ENCODE measurements at regions of chr2 and their contacts with region 1.

Region 1: DNA sequence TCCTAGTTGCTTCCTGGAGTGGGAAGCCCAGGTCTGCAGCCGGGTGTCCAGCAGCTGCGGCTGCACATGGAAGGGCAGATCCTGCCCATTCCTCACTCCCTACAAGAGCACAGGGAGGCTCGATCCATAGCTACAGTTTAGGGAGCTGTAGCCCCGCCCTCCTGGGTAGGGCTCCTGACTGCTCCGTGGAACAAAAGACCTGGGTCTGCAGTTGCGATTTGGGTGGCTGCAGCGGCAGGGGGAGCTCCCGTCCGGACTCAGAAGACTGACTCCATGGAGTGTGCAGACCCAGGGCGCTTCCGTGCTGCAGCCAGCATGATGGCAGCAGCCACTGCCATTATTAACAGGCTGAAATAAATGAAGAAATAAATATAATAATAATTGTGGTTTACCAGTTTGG is 157.3 kb downstream of the CTNNA2 start:
- DNase-seq: no peak
- ATAC-seq: no peak
- H3K4me3 ChIP-seq: no peak overlapping the region
- H3K27ac ChIP-seq: no peak overlapping the region
- H3K4me1 ChIP-seq: no peaks in the 10 kb centered on the region
- H3K27me3 ChIP-seq: no peaks in the 10 kb centered on the region
- CTCF ChIP-seq: no peak
- POLR2A ChIP-seq: no peak
- RAD21 ChIP-seq: no peak

Region 2: DNA sequence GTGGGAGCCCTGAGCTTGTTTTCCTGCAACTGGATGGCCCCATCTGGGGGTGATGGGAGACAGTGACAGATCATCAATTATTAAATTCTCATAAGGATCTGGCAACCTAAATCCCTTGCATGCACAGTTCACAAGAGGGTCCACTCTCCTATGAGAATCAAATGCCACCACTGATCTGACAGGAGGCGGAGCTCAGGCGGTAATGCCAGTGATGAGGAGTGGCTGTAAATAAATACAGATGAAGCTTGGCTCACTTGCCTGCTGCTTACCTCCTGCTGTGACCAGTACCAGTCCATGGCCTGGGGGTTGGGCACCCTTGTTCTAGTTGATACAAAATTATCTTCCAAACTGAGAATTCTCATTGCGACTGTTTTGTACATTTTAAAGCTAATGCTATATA is 101.3 kb after region 1 on chr2:
- CTCF ChIA-PET with region 1: no interaction called
- POLR2A ChIA-PET with region 1: no interaction called
- dilution Hi-C with region 1: no loop called
- in situ Hi-C with region 1: loop called (anchors 25 kb)
- intact Hi-C with region 1: no loop called
- DNase-seq: no peak
- ATAC-seq: no peak
- H3K4me3 ChIP-seq: no peak overlapping the region
- H3K27ac ChIP-seq: no peak overlapping the region
- H3K4me1 ChIP-seq: no peaks in the 10 kb centered on the region
- H3K27me3 ChIP-seq: no peaks in the 10 kb centered on the region
- CTCF ChIP-seq: no peak
- POLR2A ChIP-seq: no peak
- RAD21 ChIP-seq: no peak

Measured in IMR-90 (cell line).